PC-9 (cell line): ENCODE measurements at regions of chr21 and their contacts with region 1.

Region 1: DNA sequence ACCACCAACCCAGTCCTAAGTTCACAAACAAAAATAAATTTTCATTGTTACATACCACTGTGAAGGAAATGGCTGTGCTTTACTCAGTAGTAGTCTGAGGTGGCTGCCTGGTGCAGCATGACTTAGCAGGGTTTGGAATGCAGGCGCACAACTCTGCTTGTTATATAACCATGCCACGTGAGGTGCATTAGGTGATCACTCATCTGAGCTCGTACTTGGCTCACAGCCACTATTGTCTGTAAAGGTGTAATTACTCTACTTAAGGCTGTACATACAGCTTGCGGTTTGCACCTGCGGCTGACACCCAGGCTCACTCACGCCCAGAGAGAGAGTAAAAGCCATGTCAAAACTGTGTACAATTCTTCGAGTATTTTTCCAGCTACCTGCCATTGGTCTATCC is 599.4 kb downstream of the LTN1 start:
- DNase-seq: peak; percentile 75 to 84
- H3K4me3 ChIP-seq: no peak overlapping the region
- H3K27ac ChIP-seq: peak overlapping the region; percentile 75
- H3K4me1 ChIP-seq: peaks cover 15% of the 10 kb centered on the region
- H3K27me3 ChIP-seq: no peaks in the 10 kb centered on the region
- CTCF ChIP-seq: no peak

Region 2: DNA sequence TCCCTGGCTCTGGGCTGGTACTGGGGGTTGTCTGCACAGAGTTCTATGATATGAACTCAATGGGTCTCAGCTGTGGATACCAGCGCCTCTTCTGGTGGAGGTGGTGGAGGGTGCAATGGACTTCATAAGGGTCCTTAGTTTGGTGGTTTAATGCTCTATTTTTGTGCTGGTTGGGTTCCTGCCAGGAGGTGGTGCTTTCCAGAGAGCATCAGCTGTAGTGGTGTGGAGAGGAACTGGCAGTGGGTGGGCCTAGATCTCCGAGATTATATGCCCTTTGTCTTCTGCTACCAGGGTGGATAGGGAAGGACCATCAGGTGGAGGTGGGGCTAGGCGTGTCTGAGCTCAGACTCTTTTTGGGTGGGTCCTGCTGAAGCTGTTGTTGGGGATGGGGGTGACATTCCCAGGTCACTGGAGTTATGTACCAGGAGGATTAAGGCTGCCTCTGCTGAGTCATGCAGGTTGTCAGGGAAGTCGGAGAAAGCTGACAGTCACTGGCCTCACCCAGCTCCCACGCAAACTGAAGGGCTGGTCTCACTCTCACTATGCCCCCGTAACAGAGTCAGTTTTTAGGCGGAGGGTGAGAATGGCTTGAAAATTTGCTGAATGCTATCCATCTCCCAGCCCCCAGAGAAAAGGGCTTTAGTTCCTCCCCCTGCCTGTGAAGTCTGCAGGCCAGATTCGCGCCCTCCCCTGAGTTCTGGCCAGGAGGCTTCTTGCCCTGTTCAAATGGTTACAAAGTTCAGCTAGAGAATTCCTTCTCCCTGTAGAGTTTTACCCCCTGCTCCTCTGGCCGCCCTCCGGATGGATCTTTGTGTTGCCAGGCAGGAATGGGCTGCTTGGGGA is 303.5 kb before region 1 on chr21:
- CTCF ChIA-PET with region 1: no interaction called
- POLR2A ChIA-PET with region 1: interaction called, 8 read pairs
- intact Hi-C with region 1: loop called (anchors 1 kb)
- DNase-seq: peak in 1 of 2 experiments; percentile 65
- H3K4me3 ChIP-seq: no peak overlapping the region
- H3K27ac ChIP-seq: no peak overlapping the region
- H3K4me1 ChIP-seq: no peaks in the 10 kb centered on the region
- H3K27me3 ChIP-seq: no peaks in the 10 kb centered on the region
- CTCF ChIP-seq: no peak

Region 3: GRCh38 chr21:28436286-28436932 is 43.1 kb after region 1 on chr21:
- CTCF ChIA-PET with region 1: no interaction called
- POLR2A ChIA-PET with region 1: no interaction called
- intact Hi-C with region 1: loop called (anchors 5 kb)
- DNase-seq: peak in 1 of 2 experiments; percentile 30
- H3K4me3 ChIP-seq: no peak overlapping the region
- H3K27ac ChIP-seq: no peak overlapping the region
- H3K4me1 ChIP-seq: no peaks in the 10 kb centered on the region
- H3K27me3 ChIP-seq: no peaks in the 10 kb centered on the region
- CTCF ChIP-seq: no peak

Region 4: DNA sequence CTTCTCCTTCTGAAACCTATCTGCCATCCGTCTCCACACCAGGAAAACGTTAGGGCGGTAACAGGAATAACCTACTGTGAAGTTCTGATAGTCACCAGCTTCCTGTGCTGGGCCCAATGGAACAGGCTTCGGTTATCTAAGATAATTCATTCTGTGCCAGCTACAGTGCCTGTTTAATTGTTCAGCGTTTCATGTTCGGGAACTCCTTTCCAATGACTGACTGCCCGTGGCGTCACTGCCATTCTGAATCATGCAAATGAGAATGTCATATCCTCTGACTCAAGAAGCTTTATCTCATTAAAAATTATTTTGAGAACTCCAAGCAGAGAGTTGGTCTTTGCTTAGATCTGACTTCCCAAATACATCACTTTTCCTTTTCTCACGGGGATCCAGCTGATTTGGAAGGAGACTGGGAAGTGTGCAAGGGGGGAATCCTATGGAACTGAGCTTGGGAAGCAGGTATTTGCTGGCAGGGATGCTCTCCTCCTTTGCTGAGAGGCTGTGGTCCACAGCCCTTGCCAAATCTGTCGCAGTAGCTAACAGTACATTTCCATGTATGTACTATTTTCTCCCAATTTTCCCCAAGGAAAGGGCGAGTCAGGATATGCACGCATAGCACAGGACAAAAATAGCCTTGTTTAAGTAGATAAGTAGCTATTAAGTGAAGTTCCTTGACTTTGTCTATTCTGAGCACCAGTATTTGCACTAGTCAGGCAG is 240.7 kb after region 1 on chr21:
- CTCF ChIA-PET with region 1: no interaction called
- POLR2A ChIA-PET with region 1: no interaction called
- intact Hi-C with region 1: loop called (anchors 1 kb)
- DNase-seq: no peak
- H3K4me3 ChIP-seq: no peak overlapping the region
- H3K27ac ChIP-seq: no peak overlapping the region
- H3K4me1 ChIP-seq: peaks cover 21% of the 10 kb centered on the region
- H3K27me3 ChIP-seq: no peaks in the 10 kb centered on the region
- CTCF ChIP-seq: no peak